HCT116 (cell line): ENCODE measurements at regions of chr10 and their contacts with region 1.

Region 1: DNA sequence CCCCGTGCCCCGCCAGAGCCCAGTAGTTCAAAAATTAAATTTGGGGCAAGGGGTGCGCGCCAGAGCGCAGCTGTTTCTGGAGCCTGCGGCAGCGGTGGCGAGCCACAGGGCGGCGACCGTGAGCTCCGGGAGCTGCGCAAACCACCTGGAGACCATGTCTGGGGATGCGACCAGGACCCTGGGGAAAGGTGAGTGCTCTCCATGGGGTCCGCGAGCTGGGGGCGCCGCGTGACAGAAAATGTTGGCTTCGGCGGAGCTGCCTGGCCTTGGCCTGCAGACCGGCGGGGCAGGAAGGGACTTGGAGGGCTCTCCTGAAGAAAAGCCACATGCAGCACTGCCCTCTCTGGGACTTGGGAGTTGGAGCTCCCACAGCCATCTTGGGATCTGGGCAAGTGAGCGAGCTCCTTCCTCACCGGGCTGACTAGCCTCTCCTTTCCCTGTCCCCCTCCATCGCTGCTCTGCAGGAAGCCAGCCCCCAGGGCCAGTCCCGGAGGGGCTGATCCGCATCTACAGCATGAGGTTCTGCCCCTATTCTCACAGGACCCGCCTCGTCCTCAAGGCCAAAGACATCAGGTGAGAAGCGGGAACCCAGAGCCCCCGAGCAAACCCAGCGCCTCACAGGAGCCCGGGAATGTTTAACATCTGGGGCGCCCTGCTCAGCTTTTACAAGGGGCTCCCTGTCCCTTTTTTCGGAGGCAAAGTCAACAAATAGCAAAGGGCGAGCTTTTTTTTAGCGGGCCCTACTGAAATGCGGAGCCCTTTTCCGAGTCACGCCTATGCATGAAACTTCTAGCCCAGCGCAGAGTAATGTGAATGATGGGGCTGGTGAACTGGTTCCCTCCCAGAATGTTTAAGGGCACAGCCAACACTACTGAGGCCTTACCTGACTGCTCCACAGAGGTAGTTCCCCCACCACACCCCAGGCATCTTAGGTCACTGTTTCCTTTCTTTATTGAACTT is 6.1 kb downstream of the GSTO2 start:
- DNase-seq: peak; percentile 68
- ATAC-seq: peak; percentile 94
- H3K4me3 ChIP-seq: peak overlapping the region; percentile 77 to 79
- H3K27ac ChIP-seq: peak overlapping the region; percentile 66
- H3K4me1 ChIP-seq: peaks cover 12 to 19% of the 10 kb centered on the region in 2 experiments
- H3K27me3 ChIP-seq: no peaks in the 10 kb centered on the region
- CTCF ChIP-seq: peak in 2 of 3 experiments; percentile 98 to 99; a peak in 4 of 6 replicates
- POLR2A ChIP-seq: peak; percentile 57
- RAD21 ChIP-seq: no peak

Region 2: DNA sequence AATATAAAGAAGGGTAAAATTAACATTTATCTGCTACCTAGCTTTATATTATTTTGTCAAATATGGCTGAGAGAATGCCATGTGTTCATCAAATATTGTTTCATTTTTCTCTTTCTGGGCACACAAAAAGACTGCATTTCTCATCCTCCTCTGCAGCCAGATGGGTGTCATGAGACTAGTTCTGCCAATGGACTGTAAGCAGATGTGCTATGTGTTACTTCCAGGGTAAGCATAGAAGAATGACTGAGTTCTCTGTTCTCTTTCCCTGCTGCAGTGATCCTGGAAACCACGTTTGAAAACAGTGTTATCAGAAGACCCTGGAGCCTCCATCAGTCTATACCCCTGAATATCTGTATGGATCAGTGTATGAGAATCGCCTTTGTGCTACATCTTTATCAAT is 332.2 kb before region 1 on chr10:
- CTCF ChIA-PET with region 1: no interaction called
- POLR2A ChIA-PET with region 1: no interaction called
- RAD21 ChIA-PET with region 1: no interaction called
- intact Hi-C with region 1: no loop called
- DNase-seq: no peak
- ATAC-seq: no peak
- H3K4me3 ChIP-seq: no peak overlapping the region
- H3K27ac ChIP-seq: no peak overlapping the region
- H3K4me1 ChIP-seq: no peaks in the 10 kb centered on the region
- H3K27me3 ChIP-seq: no peaks in the 10 kb centered on the region
- CTCF ChIP-seq: no peak
- POLR2A ChIP-seq: no peak
- RAD21 ChIP-seq: no peak

Region 3: DNA sequence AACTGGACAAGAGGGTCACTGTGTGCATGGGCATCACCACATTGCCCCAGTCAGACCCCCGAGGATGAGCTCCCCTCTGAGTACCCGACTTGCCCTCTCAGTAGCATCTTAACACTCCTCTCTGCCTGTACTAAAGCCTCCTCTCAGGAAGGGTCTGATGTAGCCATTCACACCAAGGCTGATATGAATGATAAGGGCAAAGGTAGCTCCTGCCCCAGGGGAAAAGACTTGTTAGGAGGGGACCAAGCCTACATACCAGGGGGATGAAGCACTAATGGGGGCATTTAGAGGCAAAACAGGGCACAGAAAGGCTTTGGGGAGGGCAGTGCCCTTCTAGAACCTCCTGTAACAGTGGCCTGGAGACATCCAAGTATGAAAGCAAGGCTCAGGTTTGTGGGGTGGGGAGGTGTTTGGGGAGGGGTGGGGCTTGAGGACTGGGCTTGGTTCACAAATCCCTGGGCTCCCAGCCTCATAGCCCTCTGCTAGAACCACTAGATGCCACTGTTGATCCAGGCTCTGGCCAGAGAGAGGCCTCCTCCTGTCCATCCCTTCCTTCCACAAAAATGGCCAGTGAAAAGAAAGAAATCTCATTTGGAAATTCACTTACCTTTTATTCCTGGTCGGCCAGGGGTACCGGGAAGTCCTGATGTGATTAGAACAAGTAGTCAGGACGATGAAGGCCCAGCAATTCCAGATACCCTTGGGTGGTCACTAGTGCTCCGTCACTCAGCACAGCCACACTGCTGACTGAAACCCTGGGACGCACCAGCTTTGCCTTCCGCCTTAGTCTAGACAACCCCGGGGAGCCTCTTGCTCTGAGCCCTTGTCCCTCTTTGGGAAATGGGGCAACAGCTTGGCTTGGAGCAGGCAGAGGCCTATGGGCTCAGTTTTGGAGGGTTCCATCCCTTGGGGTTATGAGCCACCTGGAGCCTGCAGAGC is 229.6 kb before region 1 on chr10:
- CTCF ChIA-PET with region 1: interaction called, 35 read pairs
- POLR2A ChIA-PET with region 1: interaction called, 10 read pairs
- RAD21 ChIA-PET with region 1: interaction called, 4 to 6 read pairs
- intact Hi-C with region 1: loop called (anchors 1 kb)
- DNase-seq: peak; percentile 74
- ATAC-seq: peak; percentile 93
- H3K4me3 ChIP-seq: no peak overlapping the region
- H3K27ac ChIP-seq: no peak overlapping the region
- H3K4me1 ChIP-seq: peaks cover 15 to 38% of the 10 kb centered on the region in 2 experiments
- H3K27me3 ChIP-seq: no peaks in the 10 kb centered on the region
- CTCF ChIP-seq: peak in 2 of 3 experiments; percentile 90 to 94; a peak in 4 of 6 replicates
- POLR2A ChIP-seq: no peak
- RAD21 ChIP-seq: no peak

Region 4: DNA sequence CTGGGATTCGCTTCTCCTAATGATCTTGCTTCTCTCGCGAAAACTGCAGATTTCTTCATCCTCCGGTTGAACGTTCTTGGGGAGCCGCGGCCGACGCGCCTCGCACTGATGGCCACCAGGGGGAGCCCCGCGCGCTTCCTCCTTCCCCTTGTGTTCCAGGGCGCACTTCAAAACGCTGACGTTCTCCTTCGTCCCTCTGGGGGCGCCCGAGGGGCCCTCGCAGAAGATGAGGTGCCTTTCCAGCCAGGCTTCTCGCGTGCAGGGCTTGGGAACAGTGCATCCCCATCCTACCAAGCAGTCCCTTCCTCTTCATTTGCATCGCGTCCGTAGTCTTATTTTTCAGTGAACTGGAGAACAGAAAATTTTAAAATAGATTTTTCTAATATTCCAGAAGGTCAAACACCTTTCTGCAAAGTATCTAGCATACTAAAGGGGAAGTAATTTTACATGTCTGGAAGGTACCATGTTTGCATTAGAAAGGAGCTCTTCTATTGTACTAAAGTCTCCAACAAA is 16.5 kb after region 1 on chr10:
- CTCF ChIA-PET with region 1: interaction called, 96 read pairs
- POLR2A ChIA-PET with region 1: interaction called, 8 read pairs
- RAD21 ChIA-PET with region 1: no interaction called
- intact Hi-C with region 1: no loop called
- DNase-seq: peak; percentile 73
- ATAC-seq: peak; percentile 97
- H3K4me3 ChIP-seq: no peak overlapping the region
- H3K27ac ChIP-seq: no peak overlapping the region
- H3K4me1 ChIP-seq: peaks cover 3 to 5% of the 10 kb centered on the region in 2 experiments; a peak in 3 of 4 replicates
- H3K27me3 ChIP-seq: no peaks in the 10 kb centered on the region
- CTCF ChIP-seq: peak; percentile 100
- POLR2A ChIP-seq: no peak
- RAD21 ChIP-seq: peak; percentile 94

Region 5: GRCh38 chr10:104337974-104338735 is 63.1 kb after region 1 on chr10 and contains the start of gene ITPRIP:
- CTCF ChIA-PET with region 1: interaction called, 21 read pairs
- POLR2A ChIA-PET with region 1: interaction called, 4 read pairs
- RAD21 ChIA-PET with region 1: no interaction called
- intact Hi-C with region 1: no loop called
- DNase-seq: peak; percentile 69
- ATAC-seq: peak; percentile 73
- H3K4me3 ChIP-seq: peak within 1 kb of the TSS; percentile 76 to 95
- H3K27ac ChIP-seq: peak within 1 kb of the TSS; percentile 85
- H3K4me1 ChIP-seq: peaks cover 37 to 57% of the 10 kb centered on the region in 2 experiments
- H3K27me3 ChIP-seq: no peaks in the 10 kb centered on the region
- CTCF ChIP-seq: peak in 2 of 3 experiments; percentile 29 to 34; a peak in 3 of 6 replicates
- POLR2A ChIP-seq: peak; percentile 87
- RAD21 ChIP-seq: no peak
- total RNA-seq, gene ITPRIP: 12.0 TPM

Region 6: DNA sequence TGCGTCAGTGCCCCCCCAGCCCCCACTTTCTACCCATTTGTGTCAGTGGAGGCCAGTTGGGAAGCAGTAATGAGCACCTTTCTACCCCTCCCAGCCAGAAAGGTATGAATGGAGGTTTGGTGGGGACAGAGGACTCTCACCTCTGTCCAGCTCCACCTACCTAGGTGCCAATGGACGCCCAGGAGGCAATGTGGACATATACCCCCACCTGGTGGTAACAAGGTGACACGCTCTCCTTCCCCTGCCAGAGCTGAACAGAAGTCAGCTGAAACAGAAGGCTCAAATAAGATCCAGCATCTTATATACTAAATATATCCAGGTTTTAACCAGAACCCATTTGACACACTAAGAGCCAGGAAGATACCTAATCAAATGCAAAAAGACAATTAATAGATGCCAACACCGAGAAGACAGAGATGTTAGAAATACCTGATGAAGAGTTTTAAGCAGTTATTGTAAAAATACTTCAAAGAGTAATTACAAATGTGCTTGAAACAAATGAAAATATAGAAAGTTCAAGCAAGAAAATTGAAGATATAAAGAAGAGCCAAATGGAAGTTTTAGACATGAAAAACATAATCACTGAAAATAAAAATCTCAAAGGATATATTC is 347.7 kb after region 1 on chr10:
- CTCF ChIA-PET with region 1: interaction called, 18 read pairs
- POLR2A ChIA-PET with region 1: no interaction called
- RAD21 ChIA-PET with region 1: interaction called, 3 to 4 read pairs
- intact Hi-C with region 1: no loop called
- DNase-seq: peak; percentile 55
- ATAC-seq: peak; percentile 99
- H3K4me3 ChIP-seq: no peak overlapping the region
- H3K27ac ChIP-seq: no peak overlapping the region
- H3K4me1 ChIP-seq: no peaks in the 10 kb centered on the region
- H3K27me3 ChIP-seq: peaks cover 50% of the 10 kb centered on the region
- CTCF ChIP-seq: peak; percentile 87 to 97 (median 93)
- POLR2A ChIP-seq: no peak
- RAD21 ChIP-seq: peak; percentile 93